AG04449 (cell line): ENCODE measurements at regions of chr5 and their contacts with region 1.

Region 1: GRCh38 chr5:140107312-140108083 is 6.4 kb upstream of the PURA start:
- DNase-seq: peak; percentile 51
- H3K4me3 ChIP-seq: peak overlapping the region; percentile 85
- CTCF ChIP-seq: peak; percentile 44

Region 2: GRCh38 chr5:140131967-140132409 is 24.5 kb after region 1 on chr5:
- CTCF ChIA-PET with region 1: interaction called, 336 read pairs
- POLR2A ChIA-PET with region 1: interaction called, 5 read pairs
- DNase-seq: peak; percentile 80
- H3K4me3 ChIP-seq: no peak overlapping the region
- CTCF ChIP-seq: no peak

Region 3: GRCh38 chr5:140151730-140152597 is 44.5 kb after region 1 on chr5:
- CTCF ChIA-PET with region 1: interaction called, 336 read pairs
- POLR2A ChIA-PET with region 1: interaction called, 3 read pairs
- DNase-seq: no peak
- H3K4me3 ChIP-seq: no peak overlapping the region
- CTCF ChIP-seq: no peak